ENCODE measurements at regions of chr9 and their contacts with region 1.

Region 1: DNA sequence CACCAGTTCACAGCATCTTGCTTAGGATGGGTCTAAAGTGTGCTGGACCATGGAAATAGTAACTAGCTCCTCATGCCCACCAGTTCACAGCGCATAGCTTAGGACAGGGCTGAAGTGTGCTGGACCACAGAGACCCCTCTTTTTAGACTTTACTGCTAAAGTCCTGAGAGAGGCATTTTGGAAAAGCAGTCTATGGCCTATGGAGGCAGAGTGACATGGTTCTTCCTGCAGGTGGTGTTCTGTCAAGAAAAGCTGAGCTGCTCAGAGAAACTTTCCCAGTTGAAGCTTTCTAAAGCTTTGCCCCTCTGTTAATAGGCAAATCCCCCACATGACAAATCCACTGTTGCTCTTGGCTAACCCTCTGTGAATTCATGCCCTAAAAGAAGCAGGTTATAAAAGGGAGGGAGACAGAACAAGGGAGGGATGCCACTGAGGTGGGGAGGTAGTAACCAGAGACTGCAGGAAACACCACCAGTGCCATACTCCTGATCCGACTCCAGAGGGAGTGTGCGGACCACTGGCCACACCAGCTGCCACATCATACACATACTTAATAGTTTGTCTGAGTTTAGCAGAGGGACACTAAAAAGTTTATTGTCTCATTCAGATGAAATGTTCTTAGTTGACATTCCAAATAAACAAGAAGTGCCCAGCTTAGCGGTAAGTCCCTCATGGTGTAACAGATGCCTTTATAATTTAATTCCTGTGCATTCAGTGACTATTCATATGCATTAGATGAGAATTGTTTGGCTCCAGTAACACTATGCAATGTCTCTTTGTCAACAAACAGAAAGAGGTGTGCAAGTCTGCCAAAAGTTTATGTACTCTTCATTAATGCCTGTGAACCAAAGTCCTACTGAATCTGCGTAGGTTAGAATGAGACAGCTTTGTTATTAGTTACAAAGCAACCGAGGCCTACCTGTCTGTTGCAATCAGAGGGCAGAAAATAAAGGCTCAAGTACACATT is 236.2 kb upstream of the NFIL3 start:
- DNase-seq: no peak
- H3K4me3 ChIP-seq: no peak overlapping the region
- H3K27ac ChIP-seq: no peak overlapping the region
- H3K4me1 ChIP-seq: peaks cover 0 to 9% (median 2%) of the 10 kb centered on the region in 4 experiments; a peak in 3 of 7 replicates
- H3K27me3 ChIP-seq: no peaks in the 10 kb centered on the region
- CTCF ChIP-seq: peak; percentile 66 to 86 (median 67)
- EP300 ChIP-seq: no peak
- POLR2A ChIP-seq: no peak
- RAD21 ChIP-seq: peak; percentile 76 to 80

Region 2: DNA sequence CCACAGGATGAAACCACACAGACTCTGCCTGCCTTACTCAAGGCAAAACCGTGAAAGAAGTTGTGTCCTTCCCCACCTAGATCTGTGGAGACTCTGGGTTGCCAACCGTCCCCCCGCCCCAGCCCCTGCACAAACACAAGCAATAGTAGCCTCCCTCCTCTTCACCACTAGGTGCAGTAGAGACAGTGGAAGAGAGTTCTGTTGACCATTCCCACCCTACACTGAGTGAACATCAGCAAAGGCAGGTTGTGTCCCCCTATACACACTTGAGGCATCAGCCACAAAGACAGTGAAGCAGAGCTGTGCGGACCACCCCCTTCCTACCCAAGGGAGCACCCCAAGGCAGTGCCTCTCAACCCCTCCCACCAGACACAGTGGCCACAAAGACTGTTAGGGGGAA is 12.4 kb before region 1 on chr9:
- CTCF ChIA-PET with region 1: interaction called, 25 read pairs
- POLR2A ChIA-PET with region 1: no interaction called
- DNase-seq: no peak
- H3K4me3 ChIP-seq: no peak overlapping the region
- H3K27ac ChIP-seq: no peak overlapping the region
- H3K4me1 ChIP-seq: no peaks in the 10 kb centered on the region
- H3K27me3 ChIP-seq: no peaks in the 10 kb centered on the region
- CTCF ChIP-seq: peak; percentile 2 to 41 (median 17); a peak in 2 of 4 replicates
- EP300 ChIP-seq: no peak
- POLR2A ChIP-seq: no peak
- RAD21 ChIP-seq: peak in 1 of 2 experiments; percentile 27; a peak in 2 of 4 replicates

Region 3: GRCh38 chr9:91676046-91676445 is 16.2 kb after region 1 on chr9:
- CTCF ChIA-PET with region 1: interaction called, 43 read pairs
- POLR2A ChIA-PET with region 1: no interaction called
- DNase-seq: no peak
- H3K4me3 ChIP-seq: no peak overlapping the region
- H3K27ac ChIP-seq: no peak overlapping the region
- H3K4me1 ChIP-seq: peaks cover 0 to 2% (median 0%) of the 10 kb centered on the region in 4 experiments; a peak in 2 of 7 replicates
- H3K27me3 ChIP-seq: no peaks in the 10 kb centered on the region
- CTCF ChIP-seq: no peak
- EP300 ChIP-seq: no peak
- POLR2A ChIP-seq: no peak
- RAD21 ChIP-seq: peak; percentile 16 to 27; a peak in 3 of 4 replicates

Region 4: GRCh38 chr9:91689006-91689405 is 29.2 kb after region 1 on chr9:
- CTCF ChIA-PET with region 1: interaction called, 13 read pairs
- POLR2A ChIA-PET with region 1: no interaction called
- DNase-seq: no peak
- H3K4me3 ChIP-seq: no peak overlapping the region
- H3K27ac ChIP-seq: no peak overlapping the region
- H3K4me1 ChIP-seq: peaks cover 2 to 7% (median 5%) of the 10 kb centered on the region in 4 experiments; a peak in 4 of 7 replicates
- H3K27me3 ChIP-seq: no peaks in the 10 kb centered on the region
- CTCF ChIP-seq: no peak
- EP300 ChIP-seq: no peak
- POLR2A ChIP-seq: no peak
- RAD21 ChIP-seq: no peak

Region 5: GRCh38 chr9:91720751-91721705 is 61.2 kb after region 1 on chr9:
- CTCF ChIA-PET with region 1: interaction called, 15 read pairs
- POLR2A ChIA-PET with region 1: no interaction called
- DNase-seq: no peak
- H3K4me3 ChIP-seq: no peak overlapping the region
- H3K27ac ChIP-seq: no peak overlapping the region
- H3K4me1 ChIP-seq: peaks cover 0 to 4% (median 0%) of the 10 kb centered on the region in 4 experiments; a peak in 1 of 7 replicates
- H3K27me3 ChIP-seq: no peaks in the 10 kb centered on the region
- CTCF ChIP-seq: no peak
- EP300 ChIP-seq: no peak
- POLR2A ChIP-seq: no peak
- RAD21 ChIP-seq: no peak

Region 6: GRCh38 chr9:91727316-91727861 is 67.6 kb after region 1 on chr9:
- CTCF ChIA-PET with region 1: interaction called, 19 read pairs
- POLR2A ChIA-PET with region 1: no interaction called
- DNase-seq: peak; percentile 21 to 61
- H3K4me3 ChIP-seq: no peak overlapping the region
- H3K27ac ChIP-seq: no peak overlapping the region
- H3K4me1 ChIP-seq: no peaks in the 10 kb centered on the region
- H3K27me3 ChIP-seq: no peaks in the 10 kb centered on the region
- CTCF ChIP-seq: peak; percentile 38 to 75 (median 70)
- EP300 ChIP-seq: no peak
- POLR2A ChIP-seq: no peak
- RAD21 ChIP-seq: peak; percentile 78 to 85

Region 7: DNA sequence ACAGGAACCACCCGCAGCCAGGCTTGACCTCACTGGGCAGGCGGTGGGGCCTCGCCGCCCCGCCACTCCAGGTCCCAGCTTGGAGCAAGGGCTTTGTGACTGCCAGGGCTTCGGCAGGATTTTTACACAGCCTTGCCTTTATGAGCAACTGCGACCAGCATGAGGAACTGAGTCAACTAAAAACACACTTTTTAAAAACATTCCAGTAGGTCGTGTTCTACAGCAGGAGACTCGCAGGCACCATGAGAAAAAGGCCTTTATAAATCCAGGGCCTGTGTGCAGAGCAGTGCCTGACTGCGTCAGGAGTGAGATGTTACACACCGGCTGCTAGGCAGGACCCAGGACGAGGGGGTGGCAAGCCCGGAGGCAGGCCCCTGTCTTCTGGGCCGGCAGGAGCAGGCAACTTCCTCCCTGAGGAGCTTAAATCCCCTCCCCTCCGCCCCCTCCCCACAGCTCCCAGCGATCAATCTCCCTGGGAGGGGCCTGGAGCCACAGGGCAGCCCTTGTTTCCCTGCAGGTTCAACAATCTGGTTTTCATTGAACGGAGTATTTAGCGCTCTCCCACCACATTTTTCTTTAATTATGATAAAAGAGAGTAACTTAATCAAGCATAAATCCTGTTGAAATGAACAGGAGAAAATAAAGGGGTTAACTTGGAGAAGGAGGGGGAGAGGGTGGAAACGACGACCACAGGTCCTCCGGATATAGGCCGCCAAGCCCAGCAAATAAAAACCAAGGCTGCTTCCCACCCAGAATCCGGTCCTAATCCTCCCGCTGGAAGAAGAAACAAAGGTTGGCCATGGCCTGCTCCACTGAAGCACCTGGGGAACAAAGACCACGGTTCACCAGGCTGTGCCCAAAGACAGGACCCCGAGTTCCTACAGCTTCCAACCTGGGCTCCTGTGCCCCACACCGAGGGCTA is 197.7 kb after region 1 on chr9:
- CTCF ChIA-PET with region 1: no interaction called
- POLR2A ChIA-PET with region 1: no interaction called
- DNase-seq: peak in 1 of 2 experiments; percentile 59
- H3K4me3 ChIP-seq: no peak overlapping the region
- H3K27ac ChIP-seq: no peak overlapping the region
- H3K4me1 ChIP-seq: peaks cover 4 to 18% (median 11%) of the 10 kb centered on the region in 4 experiments
- H3K27me3 ChIP-seq: no peaks in the 10 kb centered on the region
- CTCF ChIP-seq: no peak
- EP300 ChIP-seq: no peak
- POLR2A ChIP-seq: no peak
- RAD21 ChIP-seq: no peak

Measured in H1 (cell line).